ENCODE measurements at regions of chrX and their contacts with region 1.

Region 1: GRCh38 chrX:38561126-38561868 is at the start of gene TSPAN7:
- DNase-seq: peak; percentile 82 to 91 (median 83)
- ATAC-seq: peak; percentile 73 to 97 (median 94)
- H3K4me3 ChIP-seq: peak within 1 kb of the TSS; percentile 11 to 69 (median 57)
- H3K27ac ChIP-seq: peak within 1 kb of the TSS in 8 of 12 donors; percentile 22 to 62 (median 44)
- H3K4me1 ChIP-seq: peaks cover 0 to 5% (median under 1%) of the 10 kb centered on the region in 12 donors
- H3K27me3 ChIP-seq: peaks cover 0 to 17% (median 0%) of the 10 kb centered on the region in 9 donors
- CTCF ChIP-seq: no peak
- POLR2A ChIP-seq: peak in 1 of 2 donors; percentile 26
- total RNA-seq, gene TSPAN7: 9.1 to 48.5 (median 17.5) TPM

Region 2: GRCh38 chrX:37701588-37701987 is 859.7 kb before region 1 on chrX:
- intact Hi-C with region 1: no loop called
- DNase-seq: no peak
- ATAC-seq: peak in 3 of 4 donors; percentile 55 to 80 (median 62)
- H3K4me3 ChIP-seq: no peak overlapping the region
- H3K27ac ChIP-seq: no peak overlapping the region
- H3K4me1 ChIP-seq: peaks cover 0 to 2% (median 0%) of the 10 kb centered on the region in 12 donors
- H3K27me3 ChIP-seq: peaks cover 0 to 3% (median 0%) of the 10 kb centered on the region in 9 donors
- CTCF ChIP-seq: no peak
- POLR2A ChIP-seq: no peak

Region 3: DNA sequence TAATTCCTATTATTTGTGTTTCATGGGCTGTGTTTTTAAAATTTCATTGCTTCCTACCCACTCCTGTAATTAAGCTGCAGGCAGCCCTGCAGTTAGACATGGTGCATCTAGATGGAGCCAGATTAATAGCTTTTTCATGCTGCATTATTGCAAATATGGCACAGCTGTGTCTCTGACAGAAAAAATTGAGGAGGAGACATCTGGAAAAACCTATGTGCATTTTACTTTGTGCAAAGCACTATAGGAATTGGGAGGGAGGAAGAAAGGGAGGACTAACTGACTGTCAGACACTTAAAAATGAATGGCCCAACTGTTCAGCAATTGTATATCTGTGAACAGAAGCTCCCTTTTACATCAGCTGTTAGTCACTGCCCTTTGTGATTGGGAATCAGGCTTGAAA is 225.9 kb before region 1 on chrX:
- intact Hi-C with region 1: loop called in 3 of 10 experiments (anchors 10 kb)
- DNase-seq: no peak
- ATAC-seq: no peak
- H3K4me3 ChIP-seq: no peak overlapping the region
- H3K27ac ChIP-seq: no peak overlapping the region
- H3K4me1 ChIP-seq: no peaks in the 10 kb centered on the region
- H3K27me3 ChIP-seq: peaks cover 0 to 29% (median 0%) of the 10 kb centered on the region in 9 donors
- CTCF ChIP-seq: peak in 5 of 12 donors; percentile 19 to 38 (median 31)
- POLR2A ChIP-seq: no peak

Region 4: GRCh38 chrX:38437093-38437492 is 124.2 kb before region 1 on chrX:
- intact Hi-C with region 1: no loop called
- DNase-seq: no peak
- ATAC-seq: no peak
- H3K4me3 ChIP-seq: no peak overlapping the region
- H3K27ac ChIP-seq: no peak overlapping the region
- H3K4me1 ChIP-seq: no peaks in the 10 kb centered on the region
- H3K27me3 ChIP-seq: peaks cover 0 to 27% (median 0%) of the 10 kb centered on the region in 9 donors
- CTCF ChIP-seq: no peak
- POLR2A ChIP-seq: no peak

Region 5: GRCh38 chrX:38636949-38637819 is 75.9 kb after region 1 on chrX:
- intact Hi-C with region 1: loop called in 1 of 10 experiments (anchors 10 kb)
- DNase-seq: peak in 1 of 5 donors; percentile 26
- ATAC-seq: peak in 2 of 4 donors; percentile 28 to 54
- H3K4me3 ChIP-seq: no peak overlapping the region
- H3K27ac ChIP-seq: peak overlapping the region in 8 of 12 donors; percentile 18 to 53 (median 28)
- H3K4me1 ChIP-seq: peaks cover 0 to 5% (median under 1%) of the 10 kb centered on the region in 12 donors
- H3K27me3 ChIP-seq: peaks cover 0 to 6% (median 0%) of the 10 kb centered on the region in 9 donors
- CTCF ChIP-seq: no peak
- POLR2A ChIP-seq: no peak

Measured in heart left ventricle (tissue), 16 donors.